Endothelial cell of umbilical vein (primary cell): ENCODE measurements at regions of chr11 and their contacts with region 1.

Region 1: GRCh38 chr11:12693479-12694181 is 19.4 kb downstream of the TEAD1 start:
- DNase-seq: peak; percentile 99
- H3K4me3 ChIP-seq: peak overlapping the region in 1 of 3 experiments; percentile 28
- H3K27ac ChIP-seq: peak overlapping the region; percentile 95
- H3K4me1 ChIP-seq: peaks cover 54% of the 10 kb centered on the region
- H3K27me3 ChIP-seq: no peaks in the 10 kb centered on the region
- CTCF ChIP-seq: no peak
- POLR2A ChIP-seq: peak; percentile 28

Region 2: DNA sequence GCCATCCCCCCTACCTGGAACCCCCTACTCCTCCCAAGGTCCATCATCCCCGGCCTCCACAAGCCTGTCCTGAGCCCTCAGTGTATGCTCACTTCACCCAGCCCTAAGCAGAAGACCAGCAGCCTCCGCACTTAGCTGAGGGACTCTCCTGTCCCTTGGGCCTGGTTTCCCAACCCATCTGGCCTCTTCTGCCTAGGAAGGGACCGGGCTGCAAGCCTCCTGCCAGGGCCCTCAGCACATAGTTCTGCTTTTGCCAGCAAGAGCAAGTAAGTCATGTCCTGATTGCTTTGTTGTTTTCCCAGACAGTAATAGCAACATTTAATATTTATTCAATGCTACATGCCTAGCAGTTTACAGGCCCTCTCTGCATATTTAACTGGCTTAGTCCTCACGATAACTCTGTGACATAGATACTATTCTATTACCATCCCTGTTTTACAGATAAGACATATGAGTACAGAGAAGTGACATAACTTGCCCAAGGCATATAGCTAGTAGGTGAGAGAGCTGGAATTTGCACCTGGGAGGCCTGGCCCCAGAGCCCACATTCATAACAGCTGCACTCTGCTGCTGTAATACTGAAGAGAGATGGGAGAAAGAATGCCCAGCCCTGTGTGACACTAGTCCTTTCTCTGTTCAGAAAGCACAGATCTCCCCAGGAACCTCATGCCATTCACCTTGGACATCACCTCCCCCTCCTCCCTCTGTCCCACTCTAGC is 177.1 kb before region 1 on chr11:
- CTCF ChIA-PET with region 1: no interaction called
- POLR2A ChIA-PET with region 1: no interaction called
- dilution Hi-C with region 1: no loop called
- intact Hi-C with region 1: no loop called
- DNase-seq: no peak
- H3K4me3 ChIP-seq: no peak overlapping the region
- H3K27ac ChIP-seq: no peak overlapping the region
- H3K4me1 ChIP-seq: peaks cover 14% of the 10 kb centered on the region
- H3K27me3 ChIP-seq: no peaks in the 10 kb centered on the region
- CTCF ChIP-seq: no peak
- POLR2A ChIP-seq: no peak

Region 3: DNA sequence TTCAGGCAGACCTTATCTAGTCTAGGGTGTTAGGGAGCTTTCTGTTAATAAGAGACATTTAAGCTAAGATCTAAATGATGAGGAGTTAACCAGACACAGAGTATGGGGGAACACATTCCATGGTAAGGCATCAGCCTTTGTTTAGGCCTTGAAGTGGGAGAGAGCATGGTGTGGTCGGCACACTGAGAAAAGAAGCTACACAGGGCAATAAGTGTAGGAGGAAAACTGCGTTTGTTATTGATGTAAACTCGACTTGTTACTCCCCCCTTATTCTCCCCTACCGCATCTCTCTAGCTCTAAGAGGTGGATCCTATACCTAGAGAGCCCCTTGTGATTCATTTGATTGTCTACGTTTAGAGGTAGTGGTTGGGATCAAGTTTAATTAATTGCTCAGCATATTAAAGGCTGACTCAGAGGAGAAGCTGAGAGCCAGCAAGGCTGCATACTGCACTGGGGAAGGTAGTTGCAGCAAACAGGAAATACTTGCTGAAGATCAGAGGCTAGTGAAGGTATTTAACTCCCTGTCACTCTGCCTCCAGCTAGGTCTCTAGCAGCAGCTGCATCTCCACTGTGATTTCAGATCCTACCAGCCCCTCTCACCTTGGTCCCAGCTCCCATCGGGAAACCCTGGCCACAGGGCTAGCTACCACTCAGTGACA is 106.2 kb before region 1 on chr11:
- CTCF ChIA-PET with region 1: no interaction called
- POLR2A ChIA-PET with region 1: no interaction called
- dilution Hi-C with region 1: no loop called
- intact Hi-C with region 1: no loop called
- DNase-seq: peak; percentile 12
- H3K4me3 ChIP-seq: no peak overlapping the region
- H3K27ac ChIP-seq: no peak overlapping the region
- H3K4me1 ChIP-seq: no peaks in the 10 kb centered on the region
- H3K27me3 ChIP-seq: peaks cover 20% of the 10 kb centered on the region in 2 experiments
- CTCF ChIP-seq: no peak
- POLR2A ChIP-seq: no peak

Region 4: DNA sequence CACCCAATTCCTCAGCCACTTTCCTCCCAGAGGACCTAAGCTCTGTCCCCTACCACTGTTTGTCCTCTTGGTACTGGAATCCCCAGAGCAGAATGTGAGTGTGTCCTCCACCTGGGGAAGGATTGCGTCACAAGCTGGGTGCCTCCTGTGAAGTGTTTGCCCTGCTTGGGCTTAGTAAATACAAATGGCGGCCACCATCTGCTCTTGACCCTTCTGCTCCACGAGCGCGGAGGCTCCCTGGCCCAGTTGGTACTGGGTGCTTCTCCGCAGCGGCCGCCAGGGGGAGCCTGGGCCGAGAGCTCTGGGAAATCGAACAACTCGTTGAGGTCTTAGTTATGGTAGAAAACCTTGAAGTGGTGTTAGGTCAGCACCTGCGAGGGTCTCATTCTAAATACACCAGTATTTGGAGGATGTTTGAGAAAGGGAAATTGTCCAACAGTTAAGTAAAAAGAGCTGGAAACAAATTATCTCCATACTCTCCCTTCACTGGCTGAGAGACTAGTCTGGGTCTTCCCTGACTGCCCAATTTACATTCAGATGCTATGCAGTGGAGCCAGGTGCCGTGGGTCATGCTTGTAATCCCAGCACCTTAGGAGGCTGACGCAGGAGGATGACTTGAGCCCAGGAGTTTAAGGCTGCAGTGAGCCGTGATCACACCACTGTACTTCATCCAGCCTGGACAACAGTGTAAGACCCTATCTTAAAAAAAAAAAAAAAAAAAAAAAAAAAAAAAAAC is 94.1 kb before region 1 on chr11:
- CTCF ChIA-PET with region 1: interaction called, 14 read pairs
- POLR2A ChIA-PET with region 1: no interaction called
- dilution Hi-C with region 1: no loop called
- intact Hi-C with region 1: no loop called
- DNase-seq: peak; percentile 18
- H3K4me3 ChIP-seq: no peak overlapping the region
- H3K27ac ChIP-seq: no peak overlapping the region
- H3K4me1 ChIP-seq: peaks cover 7% of the 10 kb centered on the region
- H3K27me3 ChIP-seq: no peaks in the 10 kb centered on the region
- CTCF ChIP-seq: peak; percentile 76 to 77
- POLR2A ChIP-seq: no peak

Region 5: GRCh38 chr11:12761029-12761428 is 67.4 kb after region 1 on chr11:
- CTCF ChIA-PET with region 1: interaction called, 4 read pairs
- POLR2A ChIA-PET with region 1: no interaction called
- dilution Hi-C with region 1: no loop called
- intact Hi-C with region 1: loop called (anchors 2 kb)
- DNase-seq: peak; percentile 65
- H3K4me3 ChIP-seq: no peak overlapping the region
- H3K27ac ChIP-seq: peak overlapping the region; percentile 10
- H3K4me1 ChIP-seq: peaks cover 11% of the 10 kb centered on the region
- H3K27me3 ChIP-seq: no peaks in the 10 kb centered on the region
- CTCF ChIP-seq: peak; percentile 40 to 45
- POLR2A ChIP-seq: no peak

Region 6: GRCh38 chr11:12813371-12814225 is 120.0 kb after region 1 on chr11:
- CTCF ChIA-PET with region 1: interaction called, 5 read pairs
- POLR2A ChIA-PET with region 1: no interaction called
- dilution Hi-C with region 1: no loop called
- intact Hi-C with region 1: loop called (anchors 1 kb)
- DNase-seq: peak; percentile 17
- H3K4me3 ChIP-seq: no peak overlapping the region
- H3K27ac ChIP-seq: no peak overlapping the region
- H3K4me1 ChIP-seq: peaks cover 15% of the 10 kb centered on the region
- H3K27me3 ChIP-seq: no peaks in the 10 kb centered on the region
- CTCF ChIP-seq: no peak
- POLR2A ChIP-seq: no peak

Region 7: DNA sequence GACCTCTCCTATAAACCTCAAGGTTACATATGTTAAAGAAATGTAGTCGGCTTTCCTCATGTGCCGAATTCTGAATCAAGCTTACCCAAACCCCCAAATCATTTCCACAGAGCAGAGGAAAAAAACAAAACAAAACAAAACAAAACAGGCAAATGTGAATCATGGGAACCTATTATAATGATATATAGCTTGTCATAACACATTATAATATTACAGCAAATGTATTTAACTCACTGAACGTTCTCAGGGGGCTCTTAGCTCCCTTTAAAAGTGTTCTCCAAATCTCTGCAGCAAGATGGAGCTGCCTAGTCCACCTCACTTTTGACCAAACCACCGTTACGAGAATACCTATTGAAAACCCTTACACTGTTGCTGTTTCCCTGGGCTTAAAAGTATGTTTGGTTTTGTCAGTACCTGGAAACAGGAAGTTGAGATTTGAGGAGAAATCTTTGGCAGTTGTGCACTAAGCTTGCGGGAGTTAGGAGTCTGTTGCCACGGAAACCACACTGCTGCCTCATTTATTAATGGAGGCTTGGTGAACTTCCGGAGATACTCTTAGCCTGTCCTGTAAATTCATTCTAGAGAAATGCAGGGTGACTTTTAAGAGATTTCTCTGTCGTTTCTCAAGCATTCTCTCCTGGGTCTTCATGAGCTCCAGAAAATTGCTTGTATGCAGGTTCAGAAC is 148.5 kb after region 1 on chr11:
- CTCF ChIA-PET with region 1: interaction called, 3 read pairs
- POLR2A ChIA-PET with region 1: no interaction called
- dilution Hi-C with region 1: no loop called
- intact Hi-C with region 1: loop called (anchors 1 kb)
- DNase-seq: peak; percentile 85
- H3K4me3 ChIP-seq: peak overlapping the region in 1 of 3 experiments; percentile 30
- H3K27ac ChIP-seq: peak overlapping the region; percentile 56
- H3K4me1 ChIP-seq: peaks cover 38% of the 10 kb centered on the region
- H3K27me3 ChIP-seq: no peaks in the 10 kb centered on the region
- CTCF ChIP-seq: no peak
- POLR2A ChIP-seq: no peak

Region 8: DNA sequence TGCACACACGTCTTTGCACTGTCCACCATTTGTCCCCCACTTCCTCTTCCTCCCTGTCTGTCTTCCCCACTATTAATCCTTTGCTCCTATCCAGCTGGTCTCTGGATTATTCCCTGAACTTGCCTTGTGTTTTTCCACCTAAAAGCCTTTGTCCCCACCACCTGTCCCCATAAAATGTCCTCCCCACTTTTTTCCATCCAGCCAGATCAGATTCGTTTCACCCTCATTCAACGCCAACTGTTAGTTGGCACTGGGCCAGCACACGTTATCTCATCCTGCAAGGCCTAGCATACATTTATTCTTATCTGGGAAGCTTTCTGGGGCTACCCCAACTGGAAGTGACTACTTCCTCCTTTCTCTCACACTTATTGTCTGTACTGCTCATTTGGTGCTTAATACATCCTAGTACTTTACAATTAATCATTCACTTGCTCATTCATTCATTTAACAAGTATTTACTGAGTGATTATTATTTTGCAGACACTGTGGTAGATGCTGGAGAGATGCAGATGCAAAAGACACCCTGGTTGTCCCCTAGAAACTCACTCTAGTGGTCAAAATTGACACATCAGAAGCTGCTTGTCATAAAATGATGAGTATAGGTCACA is 411.7 kb after region 1 on chr11:
- CTCF ChIA-PET with region 1: no interaction called
- POLR2A ChIA-PET with region 1: no interaction called
- dilution Hi-C with region 1: no loop called
- intact Hi-C with region 1: loop called (anchors 1 kb)
- DNase-seq: peak; percentile 99
- H3K4me3 ChIP-seq: peak overlapping the region in 1 of 3 experiments; percentile 0
- H3K27ac ChIP-seq: peak overlapping the region; percentile 60
- H3K4me1 ChIP-seq: peaks cover 39% of the 10 kb centered on the region
- H3K27me3 ChIP-seq: no peaks in the 10 kb centered on the region
- CTCF ChIP-seq: no peak
- POLR2A ChIP-seq: peak; percentile 70